Gastrocnemius medialis (tissue), 4 donors: ENCODE measurements at regions of chr10 and their contacts with region 1.

Region 1: DNA sequence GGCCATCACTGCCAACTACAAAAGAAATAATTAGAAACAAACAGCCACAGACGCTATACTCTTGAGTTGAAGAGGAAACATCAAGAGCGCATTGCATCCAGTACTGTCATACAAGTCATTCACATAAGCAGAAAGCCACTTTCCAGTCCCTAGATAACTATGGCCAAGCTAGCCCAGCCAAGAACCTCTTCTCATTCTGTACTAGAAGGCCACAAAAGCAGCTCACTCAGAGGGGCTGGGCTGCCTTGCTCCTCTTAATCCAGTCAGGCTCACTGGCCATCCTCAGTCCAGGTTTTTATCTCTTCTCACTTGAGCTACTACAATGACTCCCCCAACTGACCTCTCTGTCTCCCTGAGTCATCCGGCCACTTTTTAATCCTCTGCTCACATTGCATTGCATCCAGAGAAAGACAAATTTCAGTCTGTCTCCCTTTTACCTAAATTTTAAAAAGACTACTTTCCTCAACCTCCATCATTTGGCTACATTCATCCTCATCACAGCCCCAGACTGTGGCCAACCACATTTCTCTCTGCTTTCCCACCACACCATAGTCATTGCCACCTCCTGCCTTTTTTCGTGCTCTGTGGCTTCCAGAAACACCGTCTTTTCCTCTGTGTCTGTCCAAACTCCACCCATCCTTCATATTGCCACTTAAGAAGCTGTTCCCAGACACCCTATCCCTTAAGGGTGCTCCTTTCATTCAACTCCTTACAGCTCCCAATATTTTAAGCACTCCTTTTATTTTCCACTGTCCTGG is 25.0 kb downstream of the PPP1R3C start:
- DNase-seq: no peak
- ATAC-seq: peak in 1 of 2 donors; percentile 13
- H3K4me3 ChIP-seq: peak overlapping the region in 1 of 4 donors; percentile 32
- H3K27ac ChIP-seq: peak overlapping the region; percentile 84 to 97 (median 92)
- H3K4me1 ChIP-seq: peaks cover 43 to 55% of the 10 kb centered on the region in 2 donors
- H3K27me3 ChIP-seq: no peaks in the 10 kb centered on the region
- CTCF ChIP-seq: no peak
- POLR2A ChIP-seq: no peak

Region 2: DNA sequence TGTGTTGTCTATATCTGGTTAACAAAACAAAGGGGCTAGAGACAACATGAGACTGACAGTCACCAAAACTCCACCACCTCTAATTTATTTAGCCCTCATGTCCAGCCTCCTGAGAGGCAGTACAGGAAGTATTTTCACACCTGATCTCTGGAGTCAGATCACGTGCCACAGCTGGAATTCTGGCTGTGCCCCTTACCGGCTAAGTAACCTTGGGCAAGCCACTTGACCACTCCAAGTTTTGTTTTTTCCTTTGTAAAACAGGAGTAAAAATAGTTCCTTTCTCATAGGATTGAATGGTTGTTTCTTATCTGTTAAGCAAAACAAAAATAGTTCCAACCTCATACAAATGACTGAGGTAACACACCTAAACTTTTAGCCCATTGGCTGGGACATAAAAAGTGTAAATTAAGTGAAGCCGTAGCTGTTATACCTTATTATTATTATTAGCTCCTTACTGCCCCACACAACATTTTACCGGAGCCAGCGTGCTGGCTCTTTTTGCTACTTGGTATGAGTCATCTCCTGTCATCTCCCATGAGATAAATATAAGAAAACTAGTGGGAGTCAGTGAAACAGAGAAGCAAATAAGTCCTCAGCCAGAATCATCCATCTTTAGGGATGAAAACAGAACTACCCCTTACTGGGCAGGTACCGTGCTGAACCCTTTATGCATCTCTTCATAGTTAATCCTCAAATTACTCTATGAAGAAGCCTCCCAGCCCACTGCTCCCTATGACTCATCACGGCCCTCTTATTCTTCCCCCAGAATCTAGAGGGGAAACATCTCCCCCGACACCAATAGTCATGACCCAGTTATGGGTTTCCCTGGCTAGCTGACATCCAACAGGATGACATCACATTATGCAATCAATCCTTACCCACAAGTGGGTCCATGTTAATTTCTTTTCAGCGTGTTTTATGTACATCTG is 19.9 kb before region 1 on chr10:
- in situ Hi-C with region 1: no loop called
- intact Hi-C with region 1: loop called (anchors 2 kb)
- DNase-seq: peak in 1 of 2 donors; percentile 61
- ATAC-seq: peak; percentile 20 to 37
- H3K4me3 ChIP-seq: peak overlapping the region in 2 of 4 donors; percentile 1 to 13
- H3K27ac ChIP-seq: peak overlapping the region; percentile 87 to 91 (median 90)
- H3K4me1 ChIP-seq: peaks cover 60 to 67% of the 10 kb centered on the region in 2 donors
- H3K27me3 ChIP-seq: no peaks in the 10 kb centered on the region
- CTCF ChIP-seq: no peak
- POLR2A ChIP-seq: no peak